Activated CD8-positive, alpha-beta memory T cell treated with anti-CD3 and anti-CD28 coated beads, Interleukin-2, amount 10 ng/mL, durations not matched to agents 7 days and 5 days (primary cell): ENCODE measurements at regions of chr12 and their contacts with region 1.

Region 1: GRCh38 chr12:32312049-32312670 is 87.2 kb upstream of the FGD4 start:
- DNase-seq: no peak
- ATAC-seq: peak; percentile 69
- H3K4me3 Mint-ChIP-seq: no peak overlapping the region
- H3K27ac Mint-ChIP-seq: no peak overlapping the region
- H3K4me1 Mint-ChIP-seq: peaks cover 3% of the 10 kb centered on the region
- H3K27me3 Mint-ChIP-seq: no peaks in the 10 kb centered on the region

Region 2: GRCh38 chr12:31659087-31659933 is 652.9 kb before region 1 on chr12 and contains the start of gene ETFBKMT:
- CTCF ChIA-PET with region 1: interaction called, 22 read pairs
- DNase-seq: peak; percentile 98
- ATAC-seq: peak; percentile 100
- H3K4me3 Mint-ChIP-seq: peak within 1 kb of the TSS; percentile 98
- H3K27ac Mint-ChIP-seq: peak within 1 kb of the TSS; percentile 99
- H3K4me1 Mint-ChIP-seq: peaks cover 13% of the 10 kb centered on the region
- H3K27me3 Mint-ChIP-seq: no peaks in the 10 kb centered on the region
- total RNA-seq, gene ETFBKMT: 1.2 to 2.1 TPM

Region 3: DNA sequence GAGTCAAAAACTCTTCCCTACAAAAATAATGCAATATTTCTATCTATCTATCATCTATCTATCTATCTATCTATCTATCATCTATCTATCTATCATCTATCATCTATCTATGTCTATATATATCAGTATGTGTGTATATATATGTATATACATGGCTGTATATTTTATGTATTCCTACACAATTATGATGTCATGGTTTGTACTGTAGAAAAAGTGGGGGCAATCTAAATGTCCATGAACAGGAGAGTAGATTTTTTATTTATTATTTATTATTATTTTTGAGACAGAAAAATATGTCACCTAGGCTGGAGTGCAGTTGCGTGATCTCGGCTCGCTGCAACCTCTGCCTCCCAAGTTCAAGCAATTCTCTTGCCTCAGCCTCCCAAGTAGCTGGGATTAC is 251.1 kb before region 1 on chr12:
- CTCF ChIA-PET with region 1: interaction called, 17 read pairs
- DNase-seq: no peak
- ATAC-seq: no peak
- H3K4me3 Mint-ChIP-seq: no peak overlapping the region
- H3K27ac Mint-ChIP-seq: no peak overlapping the region
- H3K4me1 Mint-ChIP-seq: peaks cover 6% of the 10 kb centered on the region
- H3K27me3 Mint-ChIP-seq: peaks cover 2% of the 10 kb centered on the region

Region 4: DNA sequence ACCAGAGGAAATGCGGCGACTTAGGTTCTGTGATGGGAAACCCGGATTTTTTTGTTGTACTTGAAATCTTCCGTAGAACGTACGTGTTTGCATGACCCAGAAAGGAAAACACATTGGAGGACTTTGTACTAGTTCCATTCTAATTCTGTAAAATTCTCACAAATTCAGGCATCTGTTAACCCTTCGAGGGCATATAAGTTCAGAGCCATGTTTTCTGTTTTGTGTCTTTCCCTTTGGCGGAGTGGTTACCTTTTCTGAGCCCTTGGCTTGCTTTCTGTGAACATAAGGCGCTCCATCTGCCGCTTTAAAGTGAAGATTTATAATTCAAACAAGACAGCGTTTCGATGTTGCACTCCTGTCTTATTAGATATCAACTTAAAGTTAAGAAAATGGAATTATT is 171.3 kb before region 1 on chr12:
- CTCF ChIA-PET with region 1: no interaction called
- DNase-seq: no peak
- ATAC-seq: no peak
- H3K4me3 Mint-ChIP-seq: no peak overlapping the region
- H3K27ac Mint-ChIP-seq: no peak overlapping the region
- H3K4me1 Mint-ChIP-seq: peaks cover 11% of the 10 kb centered on the region
- H3K27me3 Mint-ChIP-seq: no peaks in the 10 kb centered on the region

Region 5: DNA sequence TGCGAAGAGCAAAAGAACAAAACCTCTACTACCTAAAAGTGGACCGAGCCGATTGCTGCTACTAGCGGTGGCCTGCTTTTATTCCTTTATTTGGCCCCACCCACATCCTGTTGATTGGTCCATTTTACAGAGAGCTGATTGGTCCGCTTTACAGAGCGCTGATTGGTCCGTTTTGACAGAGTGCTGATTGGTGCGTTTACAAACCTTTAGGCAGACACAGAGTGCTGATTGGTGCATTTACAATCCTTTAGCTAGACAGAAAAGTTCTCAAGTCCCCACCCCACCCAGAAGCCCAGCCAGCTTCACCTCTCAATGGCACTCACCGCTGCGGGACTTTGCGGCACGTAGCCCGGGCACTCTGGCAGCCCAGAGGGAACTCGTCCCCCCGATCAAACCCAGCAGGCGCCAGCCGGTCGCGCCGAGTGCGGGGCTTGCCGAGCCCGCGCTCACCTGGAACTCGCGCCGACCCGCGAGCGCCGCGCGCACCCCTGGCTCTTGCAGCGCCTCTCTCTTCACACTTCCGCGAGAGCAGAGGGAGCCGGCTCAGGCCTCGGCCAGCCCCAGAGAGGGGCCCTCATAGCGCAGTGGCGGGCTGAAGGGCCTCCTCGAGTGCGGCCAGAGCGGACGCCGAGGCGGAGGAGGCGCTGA is 78.5 kb after region 1 on chr12:
- CTCF ChIA-PET with region 1: no interaction called
- DNase-seq: peak; percentile 52
- ATAC-seq: peak; percentile 88
- H3K4me3 Mint-ChIP-seq: peak overlapping the region; percentile 56
- H3K27ac Mint-ChIP-seq: no peak overlapping the region
- H3K4me1 Mint-ChIP-seq: peaks cover 2% of the 10 kb centered on the region
- H3K27me3 Mint-ChIP-seq: peaks cover 4% of the 10 kb centered on the region